A549 (cell line): ENCODE measurements at regions of chr16 and their contacts with region 1.

Region 1: GRCh38 chr16:69083329-69083941 is 22.0 kb upstream of the HAS3 start:
- DNase-seq: no peak
- ATAC-seq: peak in 1 of 2 experiments; percentile 80; a peak in 3 of 6 replicates
- H3K4me3 ChIP-seq: no peak overlapping the region
- H3K27ac ChIP-seq: no peak overlapping the region
- H3K4me1 ChIP-seq: peaks cover 5% of the 10 kb centered on the region; the same call in 2 of the 3 replicates
- CTCF ChIP-seq: 0 out of 3 replicates have a peak, but pooled peaks have one; percentile 11
- EP300 ChIP-seq: no peak
- POLR2A ChIP-seq: no peak
- RAD21 ChIP-seq: peak in 1 of 2 experiments; percentile 26; a peak in 1 of 5 replicates

Region 2: DNA sequence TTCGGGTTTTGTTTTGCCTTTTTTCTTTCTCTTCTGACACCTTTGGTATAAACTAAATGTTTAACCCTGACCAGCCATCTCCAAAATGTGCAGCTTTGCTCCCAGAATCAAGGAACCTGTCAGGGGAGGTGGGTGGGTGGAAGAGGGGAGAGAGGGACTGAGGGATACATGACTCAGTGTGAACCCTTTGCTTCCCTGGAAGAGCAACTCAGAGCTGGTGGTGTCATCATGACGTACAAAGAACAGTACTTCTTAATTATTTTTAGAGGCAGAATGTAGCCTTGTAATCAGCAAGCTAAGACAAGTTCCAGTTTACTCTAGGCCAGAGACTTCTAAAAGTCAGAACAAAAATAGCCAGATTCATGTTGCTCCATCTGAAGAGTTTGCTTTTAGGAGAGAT is 97.6 kb before region 1 on chr16:
- CTCF ChIA-PET with region 1: no interaction called
- POLR2A ChIA-PET with region 1: no interaction called
- DNase-seq: peak in 1 of 2 experiments; percentile 28
- ATAC-seq: peak in 1 of 2 experiments; percentile 36; a peak in 2 of 6 replicates
- H3K4me3 ChIP-seq: no peak overlapping the region
- H3K27ac ChIP-seq: peak overlapping the region; percentile 11 to 66; a peak in 4 of 6 replicates
- H3K4me1 ChIP-seq: peaks cover 26% of the 10 kb centered on the region
- CTCF ChIP-seq: no peak
- EP300 ChIP-seq: no peak
- POLR2A ChIP-seq: no peak
- RAD21 ChIP-seq: no peak

Region 3: DNA sequence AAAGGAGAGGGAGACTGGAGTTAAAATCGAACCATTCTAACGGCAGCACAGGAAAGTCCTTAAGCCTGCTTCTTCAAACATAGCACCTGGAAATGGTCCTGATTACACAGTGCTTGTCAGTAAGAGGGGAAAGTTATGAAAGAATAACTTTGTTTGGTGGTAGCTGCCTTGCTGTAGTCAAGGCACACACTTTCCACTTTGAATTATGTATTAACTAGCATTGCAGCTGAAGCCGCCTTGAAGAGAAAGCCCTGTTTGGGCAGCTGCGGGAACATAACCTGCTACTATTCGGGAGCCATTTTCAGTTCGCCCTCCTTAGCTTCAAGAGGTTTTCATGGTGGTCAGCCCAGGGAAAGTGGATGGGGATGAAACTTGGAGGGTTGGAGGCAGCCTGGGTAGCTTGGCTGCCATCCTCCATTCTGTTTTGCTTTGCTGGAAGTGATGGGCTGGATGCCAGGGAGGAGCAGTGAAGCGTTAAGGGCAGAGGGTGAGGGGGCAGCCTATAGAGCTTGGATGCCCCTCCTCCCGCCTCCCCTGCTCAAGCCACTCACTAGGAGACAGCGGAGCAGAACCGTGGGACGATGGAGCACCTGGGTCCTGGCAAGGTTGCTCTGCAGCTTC is 16.7 kb after region 1 on chr16:
- CTCF ChIA-PET with region 1: interaction called, 24 read pairs
- POLR2A ChIA-PET with region 1: interaction called, 11 read pairs
- DNase-seq: no peak
- ATAC-seq: no peak
- H3K4me3 ChIP-seq: no peak overlapping the region
- H3K27ac ChIP-seq: peak overlapping the region in 1 of 2 experiments; percentile 40; a peak in 1 of 6 replicates
- H3K4me1 ChIP-seq: peaks cover 16% of the 10 kb centered on the region; the same call in 1 of the 3 replicates
- CTCF ChIP-seq: no peak
- EP300 ChIP-seq: no peak
- POLR2A ChIP-seq: no peak
- RAD21 ChIP-seq: no peak